Activated naive CD4-positive, alpha-beta T cell treated with anti-CD3 and anti-CD28 coated beads for 36 hours (primary cell): ENCODE measurements at regions of chr16 and their contacts with region 1.

Region 1: GRCh38 chr16:68229431-68230198 is 6.3 kb downstream of the ESRP2 start:
- DNase-seq: peak; percentile 64
- H3K4me3 Mint-ChIP-seq: no peak overlapping the region
- H3K27ac Mint-ChIP-seq: peak overlapping the region; percentile 53
- H3K4me1 Mint-ChIP-seq: peaks cover 42% of the 10 kb centered on the region
- H3K27me3 Mint-ChIP-seq: no peaks in the 10 kb centered on the region

Region 2: DNA sequence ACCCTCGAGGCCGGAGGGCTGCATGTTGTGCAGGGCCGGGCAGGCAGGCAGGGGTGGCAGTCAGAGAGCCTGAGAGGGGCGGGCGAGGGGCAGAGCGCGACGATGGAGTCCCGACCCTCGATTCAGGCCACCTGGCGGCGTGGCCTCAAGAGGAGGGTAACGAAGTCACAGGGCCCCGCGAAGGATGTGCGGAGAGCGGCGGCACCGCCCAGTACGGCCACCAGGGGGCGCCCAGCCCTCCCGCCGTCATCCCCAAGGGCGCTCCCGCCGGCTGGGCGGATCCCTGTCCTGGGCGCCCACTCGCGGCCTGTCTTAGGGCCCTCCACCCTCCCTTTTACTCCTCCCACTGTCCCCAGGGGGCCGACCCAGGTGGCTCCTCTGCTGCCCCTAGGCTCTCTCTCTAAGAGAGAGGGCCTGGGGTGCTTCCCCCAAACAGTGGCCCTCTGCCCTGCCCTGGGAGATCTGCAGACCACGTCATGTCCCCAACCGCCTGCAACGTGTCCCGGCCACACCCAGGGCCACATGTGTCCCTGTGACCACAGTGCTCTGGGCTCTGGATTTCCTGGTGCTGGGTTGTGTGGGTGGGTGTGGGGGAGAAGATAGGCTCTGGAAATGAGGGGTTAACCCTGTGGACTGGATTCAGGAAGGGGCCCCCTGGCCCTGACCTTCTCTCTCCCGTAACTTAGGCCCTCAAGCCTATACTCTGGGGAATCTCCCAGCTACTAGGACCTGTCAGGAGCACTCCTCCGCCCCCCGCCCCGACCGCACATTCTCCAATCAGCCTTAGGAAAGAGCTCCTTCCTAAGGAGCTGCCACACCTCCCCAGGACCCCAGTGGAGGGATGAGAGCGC is 236.2 kb before region 1 on chr16:
- CTCF ChIA-PET with region 1: interaction called, 6 read pairs
- intact Hi-C with region 1: loop called (anchors 1 kb)
- DNase-seq: peak; percentile 83
- H3K4me3 Mint-ChIP-seq: peak overlapping the region; percentile 80
- H3K27ac Mint-ChIP-seq: peak overlapping the region; percentile 92
- H3K4me1 Mint-ChIP-seq: peaks cover 37% of the 10 kb centered on the region
- H3K27me3 Mint-ChIP-seq: no peaks in the 10 kb centered on the region

Region 3: GRCh38 chr16:68040507-68041288 is 188.9 kb before region 1 on chr16:
- CTCF ChIA-PET with region 1: interaction called, 10 read pairs
- intact Hi-C with region 1: no loop called
- DNase-seq: peak; percentile 95
- H3K4me3 Mint-ChIP-seq: no peak overlapping the region
- H3K27ac Mint-ChIP-seq: no peak overlapping the region
- H3K4me1 Mint-ChIP-seq: peaks cover 7% of the 10 kb centered on the region
- H3K27me3 Mint-ChIP-seq: no peaks in the 10 kb centered on the region

Region 4: DNA sequence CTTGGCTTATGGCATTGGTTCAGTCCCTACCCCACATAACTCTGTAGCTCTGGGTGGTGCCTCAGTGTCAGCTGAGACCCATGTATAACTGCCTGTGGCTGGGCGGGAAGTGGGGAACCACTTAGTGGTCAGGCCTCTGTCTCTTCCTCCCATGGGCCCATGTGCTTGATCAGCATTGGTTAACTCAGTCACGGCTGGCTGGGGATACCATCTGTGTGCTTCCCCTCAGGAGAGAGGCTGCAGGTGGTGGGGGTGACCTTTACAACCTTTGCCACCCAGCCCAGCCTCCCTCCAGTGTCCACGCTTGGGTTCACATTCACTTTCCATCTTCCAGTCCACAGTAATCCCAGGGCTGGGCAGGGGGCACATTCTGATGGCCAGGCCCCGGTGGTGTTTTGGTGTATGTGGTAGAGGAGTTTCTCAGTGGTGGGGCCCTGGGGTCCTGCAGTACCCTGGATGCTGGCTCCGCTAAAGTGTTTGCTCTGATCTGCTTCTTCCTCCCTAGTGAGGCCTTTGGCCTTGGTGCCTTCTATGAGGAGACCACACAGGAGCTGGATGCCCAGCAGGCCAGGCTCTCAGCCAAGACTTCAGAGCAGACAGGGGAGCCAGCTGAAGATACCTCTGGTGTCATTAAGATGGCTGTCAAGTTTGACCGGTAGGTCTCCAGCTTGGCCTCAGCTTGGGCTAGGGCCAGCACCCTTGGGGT is 154.6 kb before region 1 on chr16:
- CTCF ChIA-PET with region 1: interaction called, 6 read pairs
- intact Hi-C with region 1: loop called (anchors 1 kb)
- DNase-seq: peak; percentile 62
- H3K4me3 Mint-ChIP-seq: no peak overlapping the region
- H3K27ac Mint-ChIP-seq: no peak overlapping the region
- H3K4me1 Mint-ChIP-seq: peaks cover 70% of the 10 kb centered on the region
- H3K27me3 Mint-ChIP-seq: no peaks in the 10 kb centered on the region

Region 5: DNA sequence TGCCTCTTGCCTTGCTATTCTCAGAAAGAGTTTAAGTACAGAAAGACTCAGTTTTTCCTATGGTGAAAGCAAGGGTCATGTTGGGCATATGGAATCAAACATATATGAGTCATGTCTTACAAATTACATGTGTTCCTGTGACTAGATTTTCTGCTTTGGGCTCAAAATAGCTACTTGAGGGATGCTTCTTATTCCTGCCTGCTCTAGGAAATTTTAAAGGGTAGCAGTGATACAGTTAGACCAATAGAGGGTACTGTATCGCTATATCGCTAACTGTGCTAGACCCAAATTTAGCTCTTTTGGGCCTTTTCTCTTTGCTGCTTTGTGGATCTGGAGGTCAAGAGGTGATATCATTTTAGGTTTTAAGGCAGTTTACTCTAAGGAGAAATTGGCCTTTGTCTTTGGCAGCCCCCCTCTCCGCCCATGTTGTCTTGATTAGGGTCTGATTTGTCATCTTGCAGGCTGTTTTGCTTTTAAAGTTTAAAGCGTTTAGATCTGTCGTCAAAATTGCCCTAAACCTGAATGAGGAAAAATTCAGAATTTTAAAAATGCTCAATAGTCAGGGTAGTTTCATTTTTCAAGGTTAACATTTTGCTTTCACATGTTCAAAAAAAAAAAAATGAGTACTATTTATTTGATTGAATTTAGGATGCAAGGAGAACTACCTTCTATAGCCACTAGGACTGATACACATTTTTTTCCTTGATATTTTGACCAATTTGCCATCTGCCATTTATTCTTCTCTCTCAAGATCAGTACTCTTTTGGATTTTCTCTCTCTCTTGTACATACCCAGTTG is 135.6 kb before region 1 on chr16:
- CTCF ChIA-PET with region 1: interaction called, 20 read pairs
- intact Hi-C with region 1: loop called (anchors 1 kb)
- DNase-seq: no peak
- H3K4me3 Mint-ChIP-seq: peak overlapping the region; percentile 14
- H3K27ac Mint-ChIP-seq: peak overlapping the region; percentile 72
- H3K4me1 Mint-ChIP-seq: peaks cover 80% of the 10 kb centered on the region
- H3K27me3 Mint-ChIP-seq: no peaks in the 10 kb centered on the region

Region 6: DNA sequence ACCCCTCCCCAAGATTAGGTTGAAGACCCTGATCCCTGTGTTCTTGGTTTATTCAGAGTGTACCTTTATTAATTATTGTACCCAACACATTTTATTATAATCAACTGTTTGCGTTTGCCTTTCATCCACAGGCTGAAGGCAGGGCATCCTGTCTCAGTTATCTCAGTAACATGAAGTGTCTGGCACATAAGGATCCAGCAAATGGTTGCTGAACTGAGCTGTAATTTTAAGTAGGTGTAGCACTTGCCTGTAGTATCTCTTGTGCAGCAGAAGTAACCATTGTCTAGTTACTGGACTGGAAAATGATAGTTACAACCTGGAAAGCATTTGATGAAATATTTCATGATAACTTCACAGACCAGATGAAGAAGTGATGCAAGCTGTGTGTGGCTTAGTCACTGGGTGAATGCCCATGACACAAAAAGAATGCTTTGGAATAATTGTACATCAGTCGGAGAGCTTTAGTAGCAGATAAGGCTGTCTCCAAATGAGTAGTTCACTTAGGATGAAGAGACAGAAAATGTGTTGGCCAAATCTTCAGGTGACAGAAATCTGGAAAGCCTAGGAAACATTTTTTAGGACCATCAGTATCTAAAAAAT is 50.3 kb before region 1 on chr16:
- CTCF ChIA-PET with region 1: interaction called, 4 read pairs
- intact Hi-C with region 1: loop called (anchors 5 kb)
- DNase-seq: no peak
- H3K4me3 Mint-ChIP-seq: no peak overlapping the region
- H3K27ac Mint-ChIP-seq: no peak overlapping the region
- H3K4me1 Mint-ChIP-seq: peaks cover 12% of the 10 kb centered on the region
- H3K27me3 Mint-ChIP-seq: no peaks in the 10 kb centered on the region

Region 7: GRCh38 chr16:68284847-68285246 is 55.2 kb after region 1 on chr16:
- CTCF ChIA-PET with region 1: no interaction called
- intact Hi-C with region 1: no loop called
- DNase-seq: no peak
- H3K4me3 Mint-ChIP-seq: peak overlapping the region; percentile 58
- H3K27ac Mint-ChIP-seq: peak overlapping the region; percentile 92
- H3K4me1 Mint-ChIP-seq: peaks cover 98% of the 10 kb centered on the region
- H3K27me3 Mint-ChIP-seq: no peaks in the 10 kb centered on the region

Region 8: GRCh38 chr16:68406451-68407152 is 177.0 kb after region 1 on chr16:
- CTCF ChIA-PET with region 1: no interaction called
- intact Hi-C with region 1: no loop called
- DNase-seq: no peak
- H3K4me3 Mint-ChIP-seq: no peak overlapping the region
- H3K27ac Mint-ChIP-seq: no peak overlapping the region
- H3K4me1 Mint-ChIP-seq: peaks cover under 1% of the 10 kb centered on the region
- H3K27me3 Mint-ChIP-seq: no peaks in the 10 kb centered on the region

Region 9: GRCh38 chr16:68636064-68636560 is 406.5 kb after region 1 on chr16:
- CTCF ChIA-PET with region 1: no interaction called
- intact Hi-C with region 1: no loop called
- DNase-seq: no peak
- H3K4me3 Mint-ChIP-seq: no peak overlapping the region
- H3K27ac Mint-ChIP-seq: no peak overlapping the region
- H3K4me1 Mint-ChIP-seq: peaks cover 10% of the 10 kb centered on the region
- H3K27me3 Mint-ChIP-seq: peaks cover 9% of the 10 kb centered on the region